CD4-positive, alpha-beta memory T cell (primary cell): ENCODE measurements at regions of chr1 and their contacts with region 1.

Region 1: DNA sequence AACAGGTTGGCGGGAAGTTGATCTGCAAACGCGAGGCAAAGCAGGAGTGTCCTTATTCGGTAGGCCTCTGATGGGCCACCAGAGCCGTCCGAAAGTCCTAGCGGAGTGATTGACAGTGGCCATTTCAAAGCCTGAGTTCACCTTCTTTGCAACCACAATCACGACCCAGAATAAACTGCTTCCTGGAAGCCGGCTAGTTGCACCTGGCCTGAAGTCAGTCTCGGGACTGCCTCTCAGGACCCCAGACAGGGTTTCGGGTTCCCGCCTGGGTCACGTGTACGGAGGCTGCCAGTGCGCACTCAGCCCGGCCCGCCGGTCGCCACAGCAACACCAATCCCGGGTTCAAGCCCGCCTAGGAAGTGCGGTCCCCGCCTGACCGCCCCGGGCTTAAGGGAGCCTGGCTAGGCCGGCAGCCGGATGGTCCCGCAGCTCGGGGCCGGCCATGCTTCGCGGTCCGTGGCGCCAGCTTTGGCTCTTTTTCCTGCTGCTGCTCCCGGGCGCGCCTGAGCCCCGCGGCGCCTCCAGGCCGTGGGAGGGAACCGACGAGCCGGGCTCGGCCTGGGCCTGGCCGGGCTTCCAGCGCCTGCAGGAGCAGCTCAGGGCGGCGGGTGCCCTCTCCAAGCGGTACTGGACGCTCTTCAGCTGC is at the start of gene TOR3A:
- DNase-seq: peak; percentile 72 to 80 (median 75)
- H3K4me3 ChIP-seq: peak within 1 kb of the TSS; percentile 57 to 74
- H3K4me3 Mint-ChIP-seq: peak within 1 kb of the TSS; percentile 93 to 98 (median 96)
- H3K27ac ChIP-seq: peak within 1 kb of the TSS; percentile 81
- H3K27ac Mint-ChIP-seq: peak within 1 kb of the TSS; percentile 97 to 98 (median 97)
- H3K4me1 ChIP-seq: peaks cover 23% of the 10 kb centered on the region
- H3K4me1 Mint-ChIP-seq: peaks cover 15 to 37% (median 26%) of the 10 kb centered on the region in 4 donors
- H3K27me3 ChIP-seq: no peaks in the 10 kb centered on the region
- H3K27me3 Mint-ChIP-seq: no peaks in the 10 kb centered on the region
- total RNA-seq, gene TOR3A: 25.4 to 27.3 TPM

Region 2: GRCh38 chr1:178220094-178220493 is 861.7 kb before region 1 on chr1:
- CTCF ChIA-PET with region 1: no interaction called
- POLR2A ChIA-PET with region 1: no interaction called
- intact Hi-C with region 1: no loop called
- DNase-seq: no peak
- H3K4me3 ChIP-seq: no peak overlapping the region
- H3K4me3 Mint-ChIP-seq: no peak overlapping the region
- H3K27ac ChIP-seq: no peak overlapping the region
- H3K27ac Mint-ChIP-seq: no peak overlapping the region
- H3K4me1 ChIP-seq: no peaks in the 10 kb centered on the region
- H3K4me1 Mint-ChIP-seq: no peaks in the 10 kb centered on the region
- H3K27me3 ChIP-seq: no peaks in the 10 kb centered on the region
- H3K27me3 Mint-ChIP-seq: no peaks in the 10 kb centered on the region

Region 3: DNA sequence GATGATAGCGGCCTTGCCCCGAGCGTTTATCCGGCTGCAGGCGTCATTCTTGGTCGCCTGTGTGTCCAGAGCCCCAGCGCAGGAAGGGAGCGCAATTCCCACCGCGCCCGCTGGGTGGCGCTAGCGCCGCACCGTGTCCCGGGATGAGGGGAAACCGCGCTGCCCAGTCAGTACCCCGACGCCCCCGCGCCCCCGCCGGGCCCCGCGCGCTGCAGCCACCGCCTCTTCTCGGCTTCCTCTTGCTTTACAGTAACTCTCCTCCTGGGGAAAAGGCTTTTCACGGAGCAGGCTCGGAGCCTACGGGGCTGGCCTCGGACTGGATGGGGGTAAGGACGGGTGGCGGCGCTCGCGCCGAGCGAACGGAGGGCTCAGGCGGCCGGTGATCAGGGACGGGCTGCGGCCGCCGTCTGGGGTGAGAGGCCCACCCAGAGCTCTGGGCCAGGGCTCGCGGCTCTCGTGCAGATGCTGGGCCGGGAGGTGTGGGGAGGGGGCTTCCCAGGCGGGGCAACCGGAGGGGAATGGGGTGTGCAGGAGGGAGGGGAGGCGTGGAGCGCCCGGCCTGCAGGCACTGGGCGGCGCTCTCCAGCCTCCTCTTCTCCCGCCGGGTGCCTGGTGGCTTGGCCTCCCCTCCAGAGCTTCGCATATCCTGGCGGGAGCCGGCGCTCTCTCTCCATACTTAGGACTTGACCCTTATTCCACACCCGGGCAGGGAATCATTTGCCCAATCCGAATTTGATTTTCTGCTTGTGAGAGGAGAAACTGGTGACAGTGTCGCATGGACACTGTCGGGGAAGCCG is 539.1 kb before region 1 on chr1:
- CTCF ChIA-PET with region 1: no interaction called
- POLR2A ChIA-PET with region 1: no interaction called
- intact Hi-C with region 1: loop called (anchors 5 kb)
- DNase-seq: peak; percentile 73 to 88 (median 81)
- H3K4me3 ChIP-seq: peak overlapping the region; percentile 91 to 99
- H3K4me3 Mint-ChIP-seq: peak overlapping the region; percentile 92 to 95 (median 94)
- H3K27ac ChIP-seq: peak overlapping the region; percentile 39
- H3K27ac Mint-ChIP-seq: peak overlapping the region in 6 of 7 donors; percentile 65 to 90 (median 83)
- H3K4me1 ChIP-seq: peaks cover 16% of the 10 kb centered on the region
- H3K4me1 Mint-ChIP-seq: peaks cover 9 to 27% (median 11%) of the 10 kb centered on the region in 4 donors
- H3K27me3 ChIP-seq: no peaks in the 10 kb centered on the region
- H3K27me3 Mint-ChIP-seq: no peaks in the 10 kb centered on the region

Region 4: GRCh38 chr1:178566187-178566586 is 515.6 kb before region 1 on chr1:
- CTCF ChIA-PET with region 1: no interaction called
- POLR2A ChIA-PET with region 1: no interaction called
- intact Hi-C with region 1: no loop called
- DNase-seq: no peak
- H3K4me3 ChIP-seq: no peak overlapping the region
- H3K4me3 Mint-ChIP-seq: no peak overlapping the region
- H3K27ac ChIP-seq: no peak overlapping the region
- H3K27ac Mint-ChIP-seq: no peak overlapping the region
- H3K4me1 ChIP-seq: no peaks in the 10 kb centered on the region
- H3K4me1 Mint-ChIP-seq: no peaks in the 10 kb centered on the region
- H3K27me3 ChIP-seq: no peaks in the 10 kb centered on the region
- H3K27me3 Mint-ChIP-seq: no peaks in the 10 kb centered on the region

Region 5: GRCh38 chr1:178844436-178844835 is 237.4 kb before region 1 on chr1:
- CTCF ChIA-PET with region 1: no interaction called
- POLR2A ChIA-PET with region 1: no interaction called
- intact Hi-C with region 1: no loop called
- DNase-seq: no peak
- H3K4me3 ChIP-seq: no peak overlapping the region
- H3K4me3 Mint-ChIP-seq: no peak overlapping the region
- H3K27ac ChIP-seq: no peak overlapping the region
- H3K27ac Mint-ChIP-seq: no peak overlapping the region
- H3K4me1 ChIP-seq: no peaks in the 10 kb centered on the region
- H3K4me1 Mint-ChIP-seq: no peaks in the 10 kb centered on the region
- H3K27me3 ChIP-seq: no peaks in the 10 kb centered on the region
- H3K27me3 Mint-ChIP-seq: no peaks in the 10 kb centered on the region

Region 6: GRCh38 chr1:179017550-179018326 is 64.1 kb before region 1 on chr1:
- CTCF ChIA-PET with region 1: no interaction called
- POLR2A ChIA-PET with region 1: no interaction called
- intact Hi-C with region 1: no loop called
- DNase-seq: no peak
- H3K4me3 ChIP-seq: no peak overlapping the region
- H3K4me3 Mint-ChIP-seq: no peak overlapping the region
- H3K27ac ChIP-seq: no peak overlapping the region
- H3K27ac Mint-ChIP-seq: no peak overlapping the region
- H3K4me1 ChIP-seq: peaks cover 4% of the 10 kb centered on the region
- H3K4me1 Mint-ChIP-seq: peaks cover 4 to 9% (median 7%) of the 10 kb centered on the region in 4 donors
- H3K27me3 ChIP-seq: no peaks in the 10 kb centered on the region
- H3K27me3 Mint-ChIP-seq: peaks cover 0 to 4% of the 10 kb centered on the region in 2 donors

Region 7: DNA sequence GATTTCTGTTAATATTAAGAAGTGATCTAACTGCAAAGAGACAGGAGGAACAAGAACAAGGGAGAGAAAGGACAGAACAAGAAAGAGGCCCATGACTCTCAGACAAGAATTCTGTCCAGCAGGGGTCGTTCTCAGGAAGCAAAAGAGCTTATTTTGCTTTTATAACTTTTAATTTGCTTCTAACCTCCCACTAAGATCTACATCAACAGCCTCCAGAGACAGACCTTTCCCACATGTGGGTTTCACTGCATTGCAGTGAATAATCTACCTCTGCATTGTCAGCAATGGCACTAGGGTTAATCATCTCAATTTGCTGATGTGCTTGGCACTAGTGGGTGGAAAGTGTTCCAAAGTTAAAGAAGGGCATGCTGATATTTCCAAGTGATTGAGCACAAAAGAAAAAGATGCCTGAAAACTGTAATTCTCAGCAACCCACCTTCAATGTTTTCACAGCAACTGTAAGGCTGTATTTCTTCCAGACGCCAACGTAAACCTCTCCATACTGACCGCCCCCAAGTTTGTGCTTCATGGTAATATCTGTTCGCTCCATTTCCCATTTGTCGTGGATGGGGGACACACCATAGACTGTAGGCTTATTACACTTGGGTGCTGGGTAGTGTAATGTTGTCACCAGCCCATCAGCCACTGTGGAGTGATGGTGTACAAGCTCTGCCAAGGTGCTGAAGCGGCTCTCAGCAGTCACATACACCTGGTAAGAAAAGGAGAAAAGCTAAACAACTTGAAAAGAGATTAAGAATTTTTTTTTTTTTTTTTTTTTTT is 39.5 kb after region 1 on chr1:
- CTCF ChIA-PET with region 1: interaction called, 34 read pairs
- POLR2A ChIA-PET with region 1: no interaction called
- intact Hi-C with region 1: loop called (anchors 2 kb)
- DNase-seq: peak; percentile 38 to 47 (median 45)
- H3K4me3 ChIP-seq: no peak overlapping the region
- H3K4me3 Mint-ChIP-seq: peak overlapping the region in 1 of 8 donors; percentile 48
- H3K27ac ChIP-seq: no peak overlapping the region
- H3K27ac Mint-ChIP-seq: peak overlapping the region in 1 of 7 donors; percentile 30
- H3K4me1 ChIP-seq: no peaks in the 10 kb centered on the region
- H3K4me1 Mint-ChIP-seq: peaks cover 0 to 7% (median 0%) of the 10 kb centered on the region in 4 donors
- H3K27me3 ChIP-seq: no peaks in the 10 kb centered on the region
- H3K27me3 Mint-ChIP-seq: no peaks in the 10 kb centered on the region

Region 8: GRCh38 chr1:179129702-179130473 is 48.1 kb after region 1 on chr1:
- CTCF ChIA-PET with region 1: no interaction called
- POLR2A ChIA-PET with region 1: interaction called, 14 read pairs
- intact Hi-C with region 1: no loop called
- DNase-seq: peak; percentile 44 to 77 (median 72)
- H3K4me3 ChIP-seq: peak overlapping the region; percentile 19 to 34
- H3K4me3 Mint-ChIP-seq: peak overlapping the region; percentile 67 to 94 (median 86)
- H3K27ac ChIP-seq: peak overlapping the region; percentile 63
- H3K27ac Mint-ChIP-seq: peak overlapping the region; percentile 78 to 98 (median 95)
- H3K4me1 ChIP-seq: peaks cover 15% of the 10 kb centered on the region
- H3K4me1 Mint-ChIP-seq: peaks cover 7 to 17% (median 13%) of the 10 kb centered on the region in 4 donors
- H3K27me3 ChIP-seq: no peaks in the 10 kb centered on the region
- H3K27me3 Mint-ChIP-seq: no peaks in the 10 kb centered on the region

Region 9: GRCh38 chr1:179190861-179191260 is 109.1 kb after region 1 on chr1:
- CTCF ChIA-PET with region 1: interaction called, 3 read pairs
- POLR2A ChIA-PET with region 1: no interaction called
- intact Hi-C with region 1: loop called (anchors 5 kb)
- DNase-seq: no peak
- H3K4me3 ChIP-seq: no peak overlapping the region
- H3K4me3 Mint-ChIP-seq: peak overlapping the region in 2 of 8 donors; percentile 30 to 34
- H3K27ac ChIP-seq: no peak overlapping the region
- H3K27ac Mint-ChIP-seq: no peak overlapping the region
- H3K4me1 ChIP-seq: peaks cover 9% of the 10 kb centered on the region
- H3K4me1 Mint-ChIP-seq: peaks cover 13 to 23% (median 16%) of the 10 kb centered on the region in 4 donors
- H3K27me3 ChIP-seq: no peaks in the 10 kb centered on the region
- H3K27me3 Mint-ChIP-seq: no peaks in the 10 kb centered on the region

Region 10: GRCh38 chr1:179293340-179294327 is 211.8 kb after region 1 on chr1 and contains the start of gene SOAT1:
- CTCF ChIA-PET with region 1: interaction called, 30 read pairs
- POLR2A ChIA-PET with region 1: interaction called, 25 read pairs
- intact Hi-C with region 1: loop called (anchors 1 kb)
- DNase-seq: peak; percentile 89 to 92 (median 90)
- H3K4me3 ChIP-seq: peak within 1 kb of the TSS; percentile 82 to 93
- H3K4me3 Mint-ChIP-seq: peak within 1 kb of the TSS; percentile 91 to 99 (median 96)
- H3K27ac ChIP-seq: peak within 1 kb of the TSS; percentile 86
- H3K27ac Mint-ChIP-seq: peak within 1 kb of the TSS; percentile 81 to 98 (median 95)
- H3K4me1 ChIP-seq: peaks cover 46% of the 10 kb centered on the region
- H3K4me1 Mint-ChIP-seq: peaks cover 25 to 47% (median 31%) of the 10 kb centered on the region in 4 donors
- H3K27me3 ChIP-seq: no peaks in the 10 kb centered on the region
- H3K27me3 Mint-ChIP-seq: no peaks in the 10 kb centered on the region
- total RNA-seq, gene SOAT1: 51.2 to 51.6 TPM